ENCODE measurements at regions of chrX and their contacts with region 1.

Region 1: DNA sequence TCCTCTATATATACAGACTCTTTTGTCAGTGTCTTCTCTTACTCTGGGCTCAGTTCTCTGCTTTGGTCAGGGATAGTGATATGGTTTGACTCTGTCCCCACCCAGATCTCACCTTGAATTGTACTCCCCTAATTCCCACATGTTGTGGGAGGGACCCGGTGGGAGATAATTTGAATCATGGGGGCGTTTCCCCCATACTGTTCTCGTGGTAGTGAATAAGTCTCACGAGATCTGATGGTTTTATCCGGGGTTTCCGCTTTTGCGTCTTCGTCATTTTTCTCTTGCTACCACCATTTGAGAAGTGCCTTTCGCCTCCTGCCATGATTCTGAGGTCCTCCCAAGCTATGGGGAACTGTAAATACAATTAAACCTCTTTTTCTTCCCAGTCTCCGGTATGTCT is 144.4 kb downstream of the GLUD2 start:
- DNase-seq: peak in 2 of 4 experiments; percentile 10 to 84
- ATAC-seq: peak; percentile 67
- H3K4me3 ChIP-seq: peak overlapping the region; percentile 44
- H3K27ac ChIP-seq: peak overlapping the region; percentile 74
- H3K4me1 ChIP-seq: peaks cover 0 to 7% of the 10 kb centered on the region in 2 experiments; a peak in 2 of 5 replicates
- H3K27me3 ChIP-seq: no peaks in the 10 kb centered on the region
- CTCF ChIP-seq: no peak
- EP300 ChIP-seq: no peak
- POLR2A ChIP-seq: peak; percentile 84
- RAD21 ChIP-seq: no peak

Region 2: DNA sequence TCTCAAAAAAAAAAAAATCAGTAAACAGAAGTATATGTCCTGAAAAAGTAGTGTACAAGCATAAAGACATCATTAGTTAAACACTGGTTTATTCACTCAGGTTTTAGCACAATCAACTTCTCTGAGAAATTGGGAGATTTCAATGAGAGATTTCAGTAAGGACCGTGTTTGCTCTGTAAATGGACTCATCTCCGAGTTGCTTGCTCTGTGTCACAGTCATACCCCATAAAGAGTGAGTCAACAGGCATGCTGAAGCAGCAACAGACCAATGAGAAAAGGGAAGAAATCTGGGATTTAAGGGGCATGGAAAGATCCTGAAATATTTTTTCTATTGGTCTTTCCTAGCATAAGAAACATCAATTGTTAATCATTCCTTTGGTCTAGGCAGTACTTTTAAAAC is 139.7 kb before region 1 on chrX:
- CTCF ChIA-PET with region 1: no interaction called
- POLR2A ChIA-PET with region 1: no interaction called
- in situ Hi-C with region 1: no loop called
- intact Hi-C with region 1: loop called (anchors 2 kb)
- DNase-seq: no peak
- ATAC-seq: no peak
- H3K4me3 ChIP-seq: no peak overlapping the region
- H3K27ac ChIP-seq: no peak overlapping the region
- H3K4me1 ChIP-seq: peaks cover 3 to 9% of the 10 kb centered on the region in 2 experiments; a peak in 4 of 5 replicates
- H3K27me3 ChIP-seq: no peaks in the 10 kb centered on the region
- CTCF ChIP-seq: no peak
- EP300 ChIP-seq: no peak
- POLR2A ChIP-seq: no peak
- RAD21 ChIP-seq: no peak

Region 3: GRCh38 chrX:121084903-121085611 is 106.7 kb before region 1 on chrX:
- CTCF ChIA-PET with region 1: no interaction called
- POLR2A ChIA-PET with region 1: no interaction called
- in situ Hi-C with region 1: no loop called
- intact Hi-C with region 1: loop called (anchors 10 kb)
- DNase-seq: peak; percentile 17 to 70 (median 28)
- ATAC-seq: peak; percentile 90
- H3K4me3 ChIP-seq: no peak overlapping the region
- H3K27ac ChIP-seq: peak overlapping the region; percentile 73
- H3K4me1 ChIP-seq: peaks cover 0 to 11% of the 10 kb centered on the region in 2 experiments; a peak in 3 of 5 replicates
- H3K27me3 ChIP-seq: no peaks in the 10 kb centered on the region
- CTCF ChIP-seq: no peak
- EP300 ChIP-seq: no peak; the same call in 1 of the 2 replicates
- POLR2A ChIP-seq: no peak
- RAD21 ChIP-seq: no peak

Region 4: DNA sequence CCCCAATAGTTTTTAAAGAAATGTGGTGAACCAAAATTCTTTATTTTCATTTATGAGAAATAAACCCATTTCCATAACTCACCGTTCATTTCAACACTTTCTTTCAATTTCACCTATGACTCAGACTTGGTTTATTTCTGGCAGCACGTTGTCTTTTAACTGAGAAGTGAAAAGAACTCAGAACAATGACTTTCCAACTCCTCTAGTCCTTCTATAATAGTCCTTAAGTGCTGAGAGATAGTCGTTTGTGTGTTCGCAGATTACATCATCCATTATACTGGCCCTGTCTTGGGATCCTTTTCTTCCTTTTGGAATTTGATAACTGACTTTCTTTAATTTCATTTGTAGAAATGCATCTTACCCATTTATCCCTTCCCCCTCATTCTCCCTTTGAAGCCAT is 30.8 kb before region 1 on chrX:
- CTCF ChIA-PET with region 1: no interaction called
- POLR2A ChIA-PET with region 1: interaction called, 3 read pairs
- in situ Hi-C with region 1: no loop called
- intact Hi-C with region 1: loop called (anchors 1 kb)
- DNase-seq: peak; percentile 9 to 40 (median 11)
- ATAC-seq: peak; percentile 73
- H3K4me3 ChIP-seq: no peak overlapping the region
- H3K27ac ChIP-seq: peak overlapping the region; percentile 78
- H3K4me1 ChIP-seq: peaks cover 4 to 23% of the 10 kb centered on the region in 2 experiments; a peak in 4 of 5 replicates
- H3K27me3 ChIP-seq: no peaks in the 10 kb centered on the region
- CTCF ChIP-seq: no peak
- EP300 ChIP-seq: peak; percentile 34; the same call in 1 of the 2 replicates
- POLR2A ChIP-seq: no peak
- RAD21 ChIP-seq: no peak

Region 5: GRCh38 chrX:121579016-121579760 is 387.4 kb after region 1 on chrX:
- CTCF ChIA-PET with region 1: no interaction called
- POLR2A ChIA-PET with region 1: no interaction called
- in situ Hi-C with region 1: no loop called
- intact Hi-C with region 1: loop called (anchors 5 kb)
- DNase-seq: peak in 3 of 4 experiments; percentile 4 to 43 (median 4)
- ATAC-seq: peak; percentile 76
- H3K4me3 ChIP-seq: no peak overlapping the region
- H3K27ac ChIP-seq: no peak overlapping the region
- H3K4me1 ChIP-seq: no peaks in the 10 kb centered on the region
- H3K27me3 ChIP-seq: no peaks in the 10 kb centered on the region
- CTCF ChIP-seq: peak; percentile 18 to 45 (median 40); a peak in 4 of 6 replicates
- EP300 ChIP-seq: no peak
- POLR2A ChIP-seq: no peak
- RAD21 ChIP-seq: peak; percentile 40 to 68